ENCODE measurements at regions of chr11 and their contacts with region 1.

Region 1: DNA sequence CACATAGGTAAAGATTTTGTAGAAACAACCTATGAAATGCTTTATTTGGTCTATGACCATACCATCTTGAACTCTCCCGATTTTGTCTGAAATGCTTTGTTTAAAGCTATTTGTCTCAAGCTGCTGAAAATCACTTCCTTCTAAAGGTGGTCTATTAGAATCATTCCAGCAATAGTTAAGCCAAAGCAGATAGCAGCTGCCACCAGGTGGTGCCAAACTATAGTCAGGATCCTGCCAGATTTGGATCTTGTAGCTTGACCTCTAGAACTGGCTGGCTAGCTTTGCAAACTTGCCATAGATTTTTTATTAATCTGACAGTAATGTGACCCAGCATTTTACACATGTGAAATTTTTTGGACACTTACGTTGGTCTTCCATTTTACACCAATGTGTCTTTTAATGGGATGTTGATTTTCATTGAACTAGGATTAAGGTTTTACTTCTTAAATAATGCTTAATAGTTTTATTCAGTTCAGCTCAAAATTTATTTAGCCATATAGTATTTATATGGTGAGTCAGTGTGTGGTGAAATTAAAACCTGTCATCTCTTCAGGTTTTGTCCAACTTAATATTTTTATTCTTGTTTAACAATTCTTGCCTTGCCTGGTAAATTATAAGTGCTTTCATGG is 19.7 kb downstream of the CTR9 start:
- DNase-seq: peak; percentile 58
- H3K4me3 Mint-ChIP-seq: no peak overlapping the region
- H3K27ac Mint-ChIP-seq: no peak overlapping the region
- H3K4me1 Mint-ChIP-seq: no peaks in the 10 kb centered on the region
- H3K27me3 Mint-ChIP-seq: no peaks in the 10 kb centered on the region
- CTCF ChIP-seq: peak; percentile 53

Region 2: GRCh38 chr11:10750838-10751580 is 19.7 kb before region 1 on chr11 and contains the start of gene CTR9:
- CTCF ChIA-PET with region 1: interaction called, 66 read pairs
- POLR2A ChIA-PET with region 1: interaction called, 10 read pairs
- intact Hi-C with region 1: no loop called
- DNase-seq: peak; percentile 91
- H3K4me3 Mint-ChIP-seq: peak within 1 kb of the TSS; percentile 95
- H3K27ac Mint-ChIP-seq: peak within 1 kb of the TSS; percentile 97
- H3K4me1 Mint-ChIP-seq: peaks cover 6% of the 10 kb centered on the region
- H3K27me3 Mint-ChIP-seq: no peaks in the 10 kb centered on the region
- CTCF ChIP-seq: no peak
- total RNA-seq, gene CTR9: 25.8 and 28.8 TPM in 2 replicates

Region 3: GRCh38 chr11:10784232-10785145 is 13.7 kb after region 1 on chr11:
- CTCF ChIA-PET with region 1: interaction called, 15 read pairs
- POLR2A ChIA-PET with region 1: no interaction called
- intact Hi-C with region 1: no loop called
- DNase-seq: no peak
- H3K4me3 Mint-ChIP-seq: no peak overlapping the region
- H3K27ac Mint-ChIP-seq: no peak overlapping the region
- H3K4me1 Mint-ChIP-seq: no peaks in the 10 kb centered on the region
- H3K27me3 Mint-ChIP-seq: no peaks in the 10 kb centered on the region
- CTCF ChIP-seq: no peak

Region 4: DNA sequence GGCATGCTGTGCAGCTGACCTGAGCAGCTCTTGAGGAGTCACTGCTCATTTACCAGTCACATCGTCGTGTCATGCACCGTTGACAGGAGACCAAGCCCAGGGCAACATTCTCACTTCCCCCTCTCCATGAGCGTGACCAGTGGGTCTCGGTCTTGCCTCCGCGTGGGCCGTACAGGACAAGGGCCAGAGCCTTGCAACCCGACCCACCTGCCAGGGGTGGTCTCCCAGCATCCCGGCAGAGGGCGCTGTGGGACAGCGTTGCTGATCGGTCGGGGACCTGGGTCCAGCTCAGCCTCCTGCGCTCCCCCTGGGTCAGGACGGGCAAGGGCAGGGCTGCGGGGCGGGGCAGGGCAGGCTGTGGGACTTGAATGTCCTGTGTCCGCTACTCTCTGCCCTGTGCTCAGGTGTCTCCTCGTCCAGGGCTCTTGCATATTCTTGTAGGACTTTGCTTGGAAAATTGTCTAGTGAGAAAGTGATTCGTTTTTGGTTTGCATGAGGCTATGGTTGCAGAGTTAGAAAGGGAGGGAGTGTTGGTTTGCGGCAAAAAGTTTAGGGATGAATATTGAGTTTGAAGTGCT is 21.7 kb after region 1 on chr11:
- CTCF ChIA-PET with region 1: interaction called, 30 read pairs
- POLR2A ChIA-PET with region 1: no interaction called
- intact Hi-C with region 1: loop called (anchors 1 kb)
- DNase-seq: peak; percentile 88
- H3K4me3 Mint-ChIP-seq: no peak overlapping the region
- H3K27ac Mint-ChIP-seq: no peak overlapping the region
- H3K4me1 Mint-ChIP-seq: peaks cover 8% of the 10 kb centered on the region
- H3K27me3 Mint-ChIP-seq: no peaks in the 10 kb centered on the region
- CTCF ChIP-seq: peak; percentile 96

Region 5: DNA sequence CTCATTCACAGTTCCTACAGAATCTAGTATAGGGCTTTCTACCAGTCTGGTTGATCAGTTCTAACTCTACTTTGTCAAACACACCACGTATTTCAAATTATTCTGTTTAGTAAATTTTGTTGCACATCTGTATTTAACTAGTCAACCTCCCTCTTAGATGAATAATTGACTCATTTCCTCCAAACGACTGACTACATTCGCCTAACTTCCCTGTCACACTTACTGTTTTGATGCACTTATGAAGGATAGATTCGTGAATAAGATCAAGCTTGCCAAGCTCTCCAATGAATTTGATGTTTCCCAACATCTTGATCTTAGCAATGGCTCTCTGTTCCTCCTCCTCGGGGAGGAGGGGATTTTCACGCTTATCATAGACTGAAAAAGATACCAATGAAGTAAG is 32.9 kb after region 1 on chr11:
- CTCF ChIA-PET with region 1: interaction called, 10 read pairs
- POLR2A ChIA-PET with region 1: interaction called, 24 read pairs
- intact Hi-C with region 1: no loop called
- DNase-seq: no peak
- H3K4me3 Mint-ChIP-seq: no peak overlapping the region
- H3K27ac Mint-ChIP-seq: no peak overlapping the region
- H3K4me1 Mint-ChIP-seq: peaks cover 4% of the 10 kb centered on the region
- H3K27me3 Mint-ChIP-seq: no peaks in the 10 kb centered on the region
- CTCF ChIP-seq: no peak

Region 6: GRCh38 chr11:10906513-10906912 is 135.8 kb after region 1 on chr11:
- CTCF ChIA-PET with region 1: interaction called, 10 read pairs
- POLR2A ChIA-PET with region 1: no interaction called
- intact Hi-C with region 1: no loop called
- DNase-seq: peak; percentile 30
- H3K4me3 Mint-ChIP-seq: no peak overlapping the region
- H3K27ac Mint-ChIP-seq: no peak overlapping the region
- H3K4me1 Mint-ChIP-seq: peaks cover 32% of the 10 kb centered on the region
- H3K27me3 Mint-ChIP-seq: no peaks in the 10 kb centered on the region
- CTCF ChIP-seq: peak; percentile 8

Region 7: DNA sequence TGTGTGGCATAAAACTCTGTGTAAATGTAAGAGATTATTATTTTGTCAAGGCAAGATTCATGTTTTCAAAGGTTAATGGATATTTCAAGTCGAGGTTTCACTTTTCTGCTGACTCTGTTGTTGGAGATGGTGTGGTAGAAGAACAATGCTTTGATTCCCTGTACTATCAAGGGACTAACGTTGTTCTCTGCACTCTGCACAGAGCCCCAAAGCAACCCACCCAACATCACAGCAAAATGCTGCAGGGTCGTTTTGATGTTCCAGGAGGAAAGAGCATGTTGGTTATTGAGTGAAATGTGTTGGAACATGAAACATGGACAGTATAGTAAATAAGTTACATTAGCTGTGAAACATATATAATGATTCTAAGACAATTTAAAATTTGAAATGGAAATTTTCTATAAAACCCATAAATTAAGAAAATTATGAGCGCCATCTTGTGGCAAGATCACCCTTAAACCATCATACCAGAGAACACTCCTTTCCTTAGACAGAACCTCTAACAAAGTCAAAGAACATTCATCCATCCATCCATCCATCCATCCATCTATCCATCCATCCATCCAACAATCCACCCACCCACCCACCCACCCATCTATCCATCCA is 251.5 kb after region 1 on chr11:
- CTCF ChIA-PET with region 1: interaction called, 41 read pairs
- POLR2A ChIA-PET with region 1: interaction called, 4 read pairs
- intact Hi-C with region 1: no loop called
- DNase-seq: peak; percentile 36
- H3K4me3 Mint-ChIP-seq: no peak overlapping the region
- H3K27ac Mint-ChIP-seq: no peak overlapping the region
- H3K4me1 Mint-ChIP-seq: peaks cover 9% of the 10 kb centered on the region
- H3K27me3 Mint-ChIP-seq: no peaks in the 10 kb centered on the region
- CTCF ChIP-seq: peak; percentile 46